GM10248 (cell line): ENCODE measurements at regions of chr3 and their contacts with region 1.

Region 1: GRCh38 chr3:101665851-101666250 is 11.1 kb downstream of the ZBTB11 start:
- DNase-seq: no peak
- CTCF ChIP-seq: no peak

Region 2: GRCh38 chr3:101676765-101677435 is 11.0 kb after region 1 on chr3 and contains the start of gene ZBTB11:
- CTCF ChIA-PET with region 1: interaction called, 44 read pairs
- POLR2A ChIA-PET with region 1: interaction called, 6 read pairs
- DNase-seq: peak; percentile 96
- CTCF ChIP-seq: peak; percentile 43